H1 (cell line): ENCODE measurements at regions of chr14 and their contacts with region 1.

Region 1: GRCh38 chr14:69260861-69261564 is 1.1 kb downstream of the GALNT16 start:
- DNase-seq: peak in 1 of 2 experiments; percentile 87
- H3K4me3 ChIP-seq: peak overlapping the region; percentile 67 to 94 (median 78)
- H3K27ac ChIP-seq: no peak overlapping the region
- H3K4me1 ChIP-seq: peaks cover 5 to 13% (median 9%) of the 10 kb centered on the region in 4 experiments
- H3K27me3 ChIP-seq: peaks cover 13 to 57% (median 42%) of the 10 kb centered on the region in 4 experiments
- CTCF ChIP-seq: peak; percentile 57 to 76 (median 66)
- EP300 ChIP-seq: no peak
- POLR2A ChIP-seq: no peak
- RAD21 ChIP-seq: peak; percentile 43 to 60; a peak in 3 of 4 replicates

Region 2: GRCh38 chr14:69079183-69079742 is 181.8 kb before region 1 on chr14:
- CTCF ChIA-PET with region 1: no interaction called
- POLR2A ChIA-PET with region 1: no interaction called
- DNase-seq: no peak
- H3K4me3 ChIP-seq: no peak overlapping the region
- H3K27ac ChIP-seq: no peak overlapping the region
- H3K4me1 ChIP-seq: no peaks in the 10 kb centered on the region; a peak in 1 of 7 replicates
- H3K27me3 ChIP-seq: no peaks in the 10 kb centered on the region
- CTCF ChIP-seq: no peak
- EP300 ChIP-seq: no peak
- POLR2A ChIP-seq: no peak
- RAD21 ChIP-seq: no peak

Region 3: DNA sequence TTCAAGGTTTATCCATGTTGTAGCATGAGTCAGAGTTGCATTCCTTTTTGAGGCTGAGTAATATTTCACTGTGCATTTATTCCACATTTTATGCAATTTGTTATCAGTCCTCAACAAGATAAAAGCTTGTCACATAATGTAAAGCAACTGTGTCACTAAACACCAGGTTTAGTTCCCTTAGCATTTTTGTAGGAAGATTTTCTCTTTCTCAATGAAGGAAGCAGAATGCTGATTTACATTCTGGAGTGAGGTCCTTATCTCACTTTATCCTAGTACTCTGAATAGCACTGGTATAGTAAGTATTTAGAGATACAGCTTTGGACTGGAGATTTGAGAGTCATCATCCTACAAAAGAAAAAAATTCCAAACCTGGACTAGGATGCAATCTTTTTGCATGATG is 79.5 kb before region 1 on chr14:
- CTCF ChIA-PET with region 1: no interaction called
- POLR2A ChIA-PET with region 1: no interaction called
- DNase-seq: no peak
- H3K4me3 ChIP-seq: no peak overlapping the region
- H3K27ac ChIP-seq: no peak overlapping the region
- H3K4me1 ChIP-seq: peaks cover 0 to 9% (median 3%) of the 10 kb centered on the region in 4 experiments; a peak in 4 of 7 replicates
- H3K27me3 ChIP-seq: no peaks in the 10 kb centered on the region
- CTCF ChIP-seq: no peak
- EP300 ChIP-seq: no peak
- POLR2A ChIP-seq: no peak
- RAD21 ChIP-seq: no peak

Region 4: DNA sequence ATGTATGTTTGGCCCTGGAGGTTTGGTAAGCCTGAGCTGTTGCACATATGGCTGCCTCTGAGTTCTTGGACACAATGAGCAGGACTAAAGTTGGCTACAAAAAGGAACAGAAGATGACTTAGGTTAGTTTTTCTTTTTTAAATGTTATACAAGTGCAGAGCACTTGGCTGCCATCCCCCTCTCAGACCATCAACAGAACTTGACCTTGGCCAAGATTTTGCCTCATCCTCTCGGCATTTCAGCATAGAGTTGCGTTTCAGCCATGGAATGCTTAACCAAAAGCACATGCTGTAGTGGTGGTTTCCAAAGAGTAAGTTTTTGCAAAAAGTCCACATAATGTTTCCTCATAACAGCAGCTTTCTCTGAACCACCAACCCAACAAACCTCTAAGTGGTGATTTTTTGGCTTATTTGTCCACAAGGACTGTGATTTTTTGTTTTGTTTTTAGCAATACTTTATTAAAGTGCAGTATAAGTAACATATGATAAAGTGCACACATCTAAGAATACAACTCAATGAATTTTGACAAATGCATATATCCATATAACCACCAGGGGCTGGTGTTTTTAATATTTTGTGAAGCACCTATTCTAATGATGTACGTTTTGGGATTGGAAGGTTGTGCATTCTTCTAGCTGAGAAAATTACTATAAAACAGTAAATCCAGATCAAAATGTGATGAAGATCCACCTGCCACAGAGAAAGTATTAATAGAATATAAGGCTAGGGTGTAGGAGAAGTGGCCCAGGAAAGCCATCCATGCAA is 13.2 kb before region 1 on chr14:
- CTCF ChIA-PET with region 1: interaction called, 38 read pairs
- POLR2A ChIA-PET with region 1: interaction called, 4 read pairs
- DNase-seq: no peak
- H3K4me3 ChIP-seq: no peak overlapping the region
- H3K27ac ChIP-seq: no peak overlapping the region
- H3K4me1 ChIP-seq: no peaks in the 10 kb centered on the region; a peak in 1 of 7 replicates
- H3K27me3 ChIP-seq: no peaks in the 10 kb centered on the region
- CTCF ChIP-seq: no peak
- EP300 ChIP-seq: no peak
- POLR2A ChIP-seq: no peak
- RAD21 ChIP-seq: no peak

Region 5: GRCh38 chr14:69288011-69288771 is 27.2 kb after region 1 on chr14:
- CTCF ChIA-PET with region 1: interaction called, 38 read pairs
- POLR2A ChIA-PET with region 1: interaction called, 3 read pairs
- DNase-seq: peak in 1 of 2 experiments; percentile 46
- H3K4me3 ChIP-seq: no peak overlapping the region
- H3K27ac ChIP-seq: no peak overlapping the region
- H3K4me1 ChIP-seq: peaks cover 0 to 5% (median 2%) of the 10 kb centered on the region in 4 experiments; a peak in 4 of 7 replicates
- H3K27me3 ChIP-seq: no peaks in the 10 kb centered on the region; a peak in 1 of 7 replicates
- CTCF ChIP-seq: peak in 2 of 3 experiments; percentile 25 to 60; a peak in 2 of 4 replicates
- EP300 ChIP-seq: no peak
- POLR2A ChIP-seq: no peak
- RAD21 ChIP-seq: peak; percentile 19 to 28; a peak in 3 of 4 replicates

Region 6: GRCh38 chr14:69363055-69363454 is 102.0 kb after region 1 on chr14:
- CTCF ChIA-PET with region 1: interaction called, 46 read pairs
- POLR2A ChIA-PET with region 1: interaction called, 3 read pairs
- DNase-seq: peak in 1 of 2 experiments; percentile 27
- H3K4me3 ChIP-seq: no peak overlapping the region
- H3K27ac ChIP-seq: no peak overlapping the region
- H3K4me1 ChIP-seq: peaks cover 0 to 3% (median 0%) of the 10 kb centered on the region in 4 experiments; a peak in 1 of 7 replicates
- H3K27me3 ChIP-seq: no peaks in the 10 kb centered on the region
- CTCF ChIP-seq: peak; percentile 88 to 95 (median 88)
- EP300 ChIP-seq: no peak
- POLR2A ChIP-seq: no peak
- RAD21 ChIP-seq: peak; percentile 93 to 95

Region 7: GRCh38 chr14:69376439-69376838 is 115.4 kb after region 1 on chr14:
- CTCF ChIA-PET with region 1: no interaction called
- POLR2A ChIA-PET with region 1: no interaction called
- DNase-seq: no peak
- H3K4me3 ChIP-seq: no peak overlapping the region
- H3K27ac ChIP-seq: no peak overlapping the region
- H3K4me1 ChIP-seq: no peaks in the 10 kb centered on the region
- H3K27me3 ChIP-seq: no peaks in the 10 kb centered on the region
- CTCF ChIP-seq: no peak
- EP300 ChIP-seq: no peak
- POLR2A ChIP-seq: no peak
- RAD21 ChIP-seq: no peak